ENCODE measurements at regions of chr1 and their contacts with region 1.

Region 1: DNA sequence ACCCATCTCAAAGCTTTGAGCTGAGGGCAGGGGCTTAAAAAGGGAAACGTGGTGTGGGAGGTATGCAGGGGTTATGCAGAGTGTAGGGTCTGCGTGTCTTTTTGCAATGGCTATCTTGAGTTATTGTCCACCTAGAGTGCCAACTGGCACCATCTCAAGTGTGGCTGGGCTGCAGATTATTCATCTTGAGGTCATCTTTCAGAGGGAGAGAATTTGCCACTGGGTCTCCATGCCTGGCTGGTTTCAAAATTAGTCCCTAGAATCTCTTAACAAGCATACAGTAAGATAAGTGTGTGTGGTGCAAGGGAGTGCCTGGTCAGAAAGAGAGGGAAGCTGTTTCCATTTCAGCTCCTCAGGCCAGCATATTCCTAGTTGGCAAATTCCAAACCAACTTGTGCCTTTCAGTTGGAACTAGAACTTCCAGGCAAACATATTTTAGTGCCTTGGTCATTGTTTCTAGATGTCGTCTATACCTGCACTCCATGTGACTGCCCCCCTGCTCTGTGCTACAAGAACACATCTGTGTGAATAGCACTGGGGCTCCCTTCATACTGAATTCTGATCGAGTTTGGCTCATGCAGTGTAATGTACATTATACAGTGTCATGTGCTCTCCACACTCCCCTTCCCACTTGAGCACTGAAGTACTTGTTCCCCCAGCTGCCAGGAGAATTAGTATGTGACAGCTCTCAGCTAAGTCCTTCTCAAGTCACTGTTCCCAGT is 5.0 kb upstream of the OR2T8 start:
- DNase-seq: no peak
- ATAC-seq: no peak
- H3K4me3 ChIP-seq: no peak overlapping the region
- H3K27ac ChIP-seq: no peak overlapping the region
- H3K4me1 ChIP-seq: no peaks in the 10 kb centered on the region
- H3K27me3 ChIP-seq: no peaks in the 10 kb centered on the region
- CTCF ChIP-seq: no peak
- POLR2A ChIP-seq: no peak
- RAD21 ChIP-seq: no peak

Region 2: DNA sequence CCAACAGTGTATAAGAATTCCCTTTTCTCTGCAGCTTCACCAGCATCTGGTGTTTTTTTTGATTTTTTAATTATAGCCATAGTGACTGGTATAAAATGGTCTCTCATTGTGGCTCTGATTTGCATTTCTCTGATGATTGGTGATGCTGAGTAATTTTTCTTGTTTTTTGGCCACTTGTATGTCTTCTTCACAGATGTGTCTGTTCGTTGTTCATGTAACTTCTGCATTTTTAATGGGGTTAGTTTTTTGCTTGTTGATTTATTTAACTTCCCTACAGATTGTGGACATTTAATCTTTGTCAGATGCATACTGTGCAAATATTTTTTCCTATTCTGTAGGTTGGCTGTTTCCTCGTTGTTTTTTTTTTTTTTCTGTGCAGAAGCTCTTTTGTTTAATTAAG is 77.9 kb after region 1 on chr1:
- CTCF ChIA-PET with region 1: no interaction called
- POLR2A ChIA-PET with region 1: no interaction called
- dilution Hi-C with region 1: no loop called
- in situ Hi-C with region 1: no loop called
- intact Hi-C with region 1: loop called (anchors 5 kb)
- DNase-seq: no peak
- ATAC-seq: no peak
- H3K4me3 ChIP-seq: no peak overlapping the region
- H3K27ac ChIP-seq: no peak overlapping the region
- H3K4me1 ChIP-seq: no peaks in the 10 kb centered on the region
- H3K27me3 ChIP-seq: no peaks in the 10 kb centered on the region
- CTCF ChIP-seq: no peak
- POLR2A ChIP-seq: no peak
- RAD21 ChIP-seq: no peak